ENCODE measurements at regions of chr18 and their contacts with region 1.

Region 1: GRCh38 chr18:49768051-49768391 is 45.3 kb downstream of the ACAA2 start:
- DNase-seq: no peak

Region 2: GRCh38 chr18:49510393-49511115 is 257.5 kb before region 1 on chr18:
- intact Hi-C with region 1: loop called (anchors 10 kb)
- DNase-seq: no peak

Region 3: GRCh38 chr18:49555641-49556040 is 212.4 kb before region 1 on chr18:
- intact Hi-C with region 1: loop called (anchors 5 kb)
- DNase-seq: no peak